Activated CD4-positive, alpha-beta T cell treated with anti-CD3 and anti-CD28 coated beads, Interleukin-2, amount 10 ng/mL, durations not matched to agents 7 days and 5 days (primary cell): ENCODE measurements at regions of chr1 and their contacts with region 1.

Region 1: DNA sequence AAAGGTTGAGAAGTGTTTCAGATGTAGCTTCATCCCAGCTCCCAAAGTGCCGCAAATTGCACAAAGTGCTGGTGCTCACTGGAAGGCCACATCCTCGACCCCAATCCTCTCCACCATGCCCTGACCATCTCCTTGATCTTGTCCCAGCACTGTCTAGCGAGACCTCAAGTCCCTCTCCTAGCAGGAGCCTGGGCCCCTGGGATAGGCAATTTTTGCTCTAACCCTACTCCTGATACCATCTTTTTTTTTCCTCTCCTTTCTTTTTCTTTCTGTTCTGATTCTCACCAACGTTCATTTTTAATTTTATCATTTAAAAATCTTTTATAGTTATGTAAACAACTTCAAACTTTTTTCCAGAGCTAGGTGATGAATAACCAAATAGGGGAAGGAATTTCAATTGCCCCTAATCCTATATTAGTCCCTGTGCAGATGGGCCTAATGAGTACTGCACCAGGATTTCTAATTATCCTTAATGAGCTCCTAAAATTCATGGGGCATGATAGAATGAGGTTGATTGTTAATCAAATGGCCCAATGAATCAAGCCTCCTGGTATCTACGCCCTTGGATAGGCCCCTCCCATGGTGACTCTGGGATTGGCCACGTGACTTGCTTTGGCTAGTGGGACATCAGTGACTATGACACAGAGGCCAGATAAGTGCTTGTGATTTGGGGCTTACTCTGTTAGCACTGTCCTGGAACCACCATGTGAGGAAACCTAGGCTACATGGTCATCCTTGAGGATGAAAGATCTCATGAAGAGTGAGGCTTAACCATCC is 41.5 kb upstream of the TENT5B start:
- DNase-seq: no peak
- H3K4me3 Mint-ChIP-seq: no peak overlapping the region
- H3K27ac Mint-ChIP-seq: no peak overlapping the region
- H3K4me1 Mint-ChIP-seq: no peaks in the 10 kb centered on the region
- H3K27me3 Mint-ChIP-seq: no peaks in the 10 kb centered on the region

Region 2: GRCh38 chr1:27010989-27011764 is 43.0 kb before region 1 on chr1:
- CTCF ChIA-PET with region 1: no interaction called
- POLR2A ChIA-PET with region 1: no interaction called
- DNase-seq: no peak
- H3K4me3 Mint-ChIP-seq: no peak overlapping the region
- H3K27ac Mint-ChIP-seq: no peak overlapping the region
- H3K4me1 Mint-ChIP-seq: peaks cover 11% of the 10 kb centered on the region
- H3K27me3 Mint-ChIP-seq: peaks cover 35% of the 10 kb centered on the region

Region 3: GRCh38 chr1:27071049-27071416 is 16.9 kb after region 1 on chr1:
- CTCF ChIA-PET with region 1: interaction called, 12 read pairs
- POLR2A ChIA-PET with region 1: no interaction called
- DNase-seq: no peak
- H3K4me3 Mint-ChIP-seq: no peak overlapping the region
- H3K27ac Mint-ChIP-seq: no peak overlapping the region
- H3K4me1 Mint-ChIP-seq: no peaks in the 10 kb centered on the region
- H3K27me3 Mint-ChIP-seq: no peaks in the 10 kb centered on the region